PC-3 (cell line): ENCODE measurements at regions of chr15 and their contacts with region 1.

Region 1: GRCh38 chr15:67125589-67126502 is 60.4 kb downstream of the SMAD3 start:
- DNase-seq: peak; percentile 92
- ATAC-seq: peak; percentile 57
- H3K4me3 ChIP-seq: peak overlapping the region; percentile 60
- H3K27ac ChIP-seq: peak overlapping the region; percentile 100
- H3K4me1 ChIP-seq: peaks cover 80% of the 10 kb centered on the region
- H3K27me3 ChIP-seq: no peaks in the 10 kb centered on the region
- CTCF ChIP-seq: no peak

Region 2: GRCh38 chr15:67109141-67110034 is 16.5 kb before region 1 on chr15:
- CTCF ChIA-PET with region 1: interaction called, 4 read pairs
- POLR2A ChIA-PET with region 1: interaction called, 7 read pairs
- intact Hi-C with region 1: loop called (anchors 1 kb)
- DNase-seq: no peak
- ATAC-seq: no peak
- H3K4me3 ChIP-seq: no peak overlapping the region
- H3K27ac ChIP-seq: peak overlapping the region; percentile 99
- H3K4me1 ChIP-seq: peaks cover 57% of the 10 kb centered on the region
- H3K27me3 ChIP-seq: no peaks in the 10 kb centered on the region
- CTCF ChIP-seq: no peak

Region 3: GRCh38 chr15:67150028-67150860 is 24.4 kb after region 1 on chr15:
- CTCF ChIA-PET with region 1: interaction called, 3 read pairs
- POLR2A ChIA-PET with region 1: interaction called, 7 read pairs
- intact Hi-C with region 1: loop called (anchors 1 kb)
- DNase-seq: peak; percentile 94
- ATAC-seq: peak; percentile 56
- H3K4me3 ChIP-seq: peak overlapping the region; percentile 15; the same call in 1 of the 2 replicates
- H3K27ac ChIP-seq: peak overlapping the region; percentile 100
- H3K4me1 ChIP-seq: peaks cover 61% of the 10 kb centered on the region
- H3K27me3 ChIP-seq: no peaks in the 10 kb centered on the region
- CTCF ChIP-seq: no peak

Region 4: DNA sequence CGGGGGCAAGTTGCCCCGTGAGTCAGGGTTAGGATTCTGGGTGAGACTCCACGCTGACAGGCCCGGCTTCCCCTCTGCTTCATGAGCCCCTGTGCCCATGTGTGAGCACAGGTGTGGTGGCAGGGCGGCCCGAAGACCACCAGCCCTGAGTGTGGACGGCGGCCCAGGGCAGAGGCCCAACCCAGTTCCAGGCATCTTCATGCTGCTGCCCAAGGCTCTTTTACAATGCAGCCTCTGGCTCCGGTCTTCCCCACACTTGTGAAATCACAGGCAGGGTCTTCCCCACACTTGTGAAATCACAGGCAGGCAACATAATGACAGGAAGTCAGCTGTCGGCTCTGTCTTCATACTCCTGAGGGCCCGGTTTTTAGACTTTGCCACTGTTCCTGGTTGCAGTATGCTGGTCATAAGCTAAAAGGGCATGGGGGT is 49.8 kb after region 1 on chr15:
- CTCF ChIA-PET with region 1: no interaction called
- POLR2A ChIA-PET with region 1: interaction called, 3 read pairs
- intact Hi-C with region 1: loop called (anchors 2 kb)
- DNase-seq: no peak
- ATAC-seq: no peak
- H3K4me3 ChIP-seq: no peak overlapping the region
- H3K27ac ChIP-seq: peak overlapping the region; percentile 93
- H3K4me1 ChIP-seq: peaks cover 81% of the 10 kb centered on the region
- H3K27me3 ChIP-seq: no peaks in the 10 kb centered on the region
- CTCF ChIP-seq: no peak

Region 5: GRCh38 chr15:67254238-67255175 is 128.7 kb after region 1 on chr15 and contains the starts of genes AAGAB and IQCH:
- CTCF ChIA-PET with region 1: no interaction called
- POLR2A ChIA-PET with region 1: no interaction called
- intact Hi-C with region 1: loop called (anchors 5 kb)
- DNase-seq: peak; percentile 94
- ATAC-seq: peak; percentile 91
- H3K4me3 ChIP-seq: peak within 1 kb of the TSS; percentile 78
- H3K27ac ChIP-seq: peak within 1 kb of the TSS; percentile 75
- H3K4me1 ChIP-seq: peaks cover 12% of the 10 kb centered on the region; the same call in 1 of the 2 replicates
- H3K27me3 ChIP-seq: no peaks in the 10 kb centered on the region
- CTCF ChIP-seq: no peak
- total RNA-seq, gene AAGAB: 25.7 and 30.5 TPM in 2 replicates
- total RNA-seq, gene IQCH: 2.1 and 8.2 TPM in 2 replicates

Region 6: GRCh38 chr15:67280217-67280616 is 154.4 kb after region 1 on chr15:
- CTCF ChIA-PET with region 1: no interaction called
- POLR2A ChIA-PET with region 1: no interaction called
- intact Hi-C with region 1: no loop called
- DNase-seq: no peak
- ATAC-seq: no peak
- H3K4me3 ChIP-seq: no peak overlapping the region
- H3K27ac ChIP-seq: no peak overlapping the region
- H3K4me1 ChIP-seq: no peaks in the 10 kb centered on the region
- H3K27me3 ChIP-seq: no peaks in the 10 kb centered on the region
- CTCF ChIP-seq: no peak